Lower leg skin (tissue), 4 donors: ENCODE measurements at regions of chr18 and their contacts with region 1.

Region 1: DNA sequence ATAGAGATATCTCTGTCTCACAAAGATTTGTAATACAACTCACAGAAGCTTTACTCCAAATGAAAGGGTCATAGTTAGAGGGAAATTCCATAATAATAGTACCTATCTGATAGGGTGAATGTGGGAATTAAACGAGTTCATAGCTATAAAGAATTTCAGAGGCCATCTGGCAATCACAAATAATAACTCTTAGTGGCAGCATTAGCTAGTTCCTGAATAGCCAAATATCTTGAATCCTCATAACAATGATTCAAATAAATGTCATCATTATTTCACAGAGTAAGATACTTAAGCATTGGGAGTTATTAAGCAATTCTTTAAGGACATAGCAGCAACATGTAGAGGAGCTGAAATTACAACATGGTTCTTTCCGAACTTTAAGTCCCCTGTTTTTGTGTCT is 1265.0 kb upstream of the PIK3C3 start:
- DNase-seq: no peak
- H3K4me3 ChIP-seq: no peak overlapping the region
- CTCF ChIP-seq: no peak
- POLR2A ChIP-seq: no peak

Region 2: GRCh38 chr18:39030124-39030655 is 1659.9 kb before region 1 on chr18:
- intact Hi-C with region 1: no loop called
- DNase-seq: no peak
- H3K4me3 ChIP-seq: no peak overlapping the region
- CTCF ChIP-seq: no peak
- POLR2A ChIP-seq: no peak

Region 3: DNA sequence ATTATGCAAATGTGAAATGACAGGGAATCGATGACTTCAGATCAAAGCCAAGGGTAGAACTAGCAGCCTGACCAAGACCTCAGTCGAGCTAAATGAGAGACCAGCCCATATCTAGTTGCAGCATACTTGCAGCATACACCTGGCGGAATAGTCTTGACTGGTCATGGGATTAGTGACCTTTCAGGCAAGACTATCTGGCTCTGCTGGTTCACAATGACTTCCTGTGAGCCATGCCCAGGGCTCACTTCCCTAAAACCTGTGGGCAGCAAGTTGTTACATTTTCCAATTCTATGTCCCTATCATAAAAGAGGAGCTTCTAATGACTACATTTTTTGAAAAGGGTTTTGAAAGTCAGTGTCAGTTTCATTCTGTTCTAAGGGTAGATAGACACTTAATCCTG is 1499.6 kb before region 1 on chr18:
- intact Hi-C with region 1: no loop called
- DNase-seq: no peak
- H3K4me3 ChIP-seq: no peak overlapping the region
- CTCF ChIP-seq: no peak
- POLR2A ChIP-seq: no peak

Region 4: GRCh38 chr18:40612356-40612755 is 77.7 kb before region 1 on chr18:
- intact Hi-C with region 1: no loop called
- DNase-seq: no peak
- H3K4me3 ChIP-seq: no peak overlapping the region
- CTCF ChIP-seq: no peak
- POLR2A ChIP-seq: no peak

Region 5: DNA sequence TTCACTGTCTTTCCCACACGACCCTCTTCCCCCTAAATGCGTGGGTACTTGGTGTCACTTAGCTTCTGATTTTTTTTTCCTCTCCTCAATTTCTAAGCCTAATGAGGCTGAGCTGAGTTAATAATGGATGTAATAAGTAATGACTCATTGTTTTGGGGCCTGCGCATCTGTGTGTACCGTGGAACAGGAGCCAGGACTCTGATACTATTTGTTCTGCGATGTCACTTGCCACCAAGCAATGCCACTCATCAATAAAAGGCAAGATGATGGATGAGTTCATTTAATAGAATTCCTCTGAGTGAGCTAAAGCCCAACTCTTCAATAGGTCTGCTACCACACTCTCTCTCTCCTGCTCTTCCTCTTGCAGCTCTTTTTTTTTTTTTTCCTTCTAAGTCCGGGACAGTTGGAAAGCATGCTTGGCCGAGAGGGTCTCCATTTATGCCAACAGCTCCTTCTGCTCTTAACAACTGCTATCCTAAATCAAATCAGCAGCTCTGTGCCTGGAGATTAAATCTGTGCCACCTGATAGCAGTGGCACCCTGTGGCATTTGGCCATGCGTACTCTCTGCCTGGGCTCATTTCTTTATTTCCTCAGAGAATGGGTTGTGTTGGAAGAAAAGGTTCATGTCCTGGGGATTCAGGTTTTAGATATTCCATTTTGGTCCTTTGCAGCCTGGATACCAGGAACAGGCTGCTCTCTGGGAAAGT is 19.2 kb before region 1 on chr18:
- intact Hi-C with region 1: loop called (anchors 2 kb)
- DNase-seq: no peak
- H3K4me3 ChIP-seq: no peak overlapping the region
- CTCF ChIP-seq: no peak
- POLR2A ChIP-seq: no peak